SK-N-SH (cell line): ENCODE measurements at regions of chr7 and their contacts with region 1.

Region 1: DNA sequence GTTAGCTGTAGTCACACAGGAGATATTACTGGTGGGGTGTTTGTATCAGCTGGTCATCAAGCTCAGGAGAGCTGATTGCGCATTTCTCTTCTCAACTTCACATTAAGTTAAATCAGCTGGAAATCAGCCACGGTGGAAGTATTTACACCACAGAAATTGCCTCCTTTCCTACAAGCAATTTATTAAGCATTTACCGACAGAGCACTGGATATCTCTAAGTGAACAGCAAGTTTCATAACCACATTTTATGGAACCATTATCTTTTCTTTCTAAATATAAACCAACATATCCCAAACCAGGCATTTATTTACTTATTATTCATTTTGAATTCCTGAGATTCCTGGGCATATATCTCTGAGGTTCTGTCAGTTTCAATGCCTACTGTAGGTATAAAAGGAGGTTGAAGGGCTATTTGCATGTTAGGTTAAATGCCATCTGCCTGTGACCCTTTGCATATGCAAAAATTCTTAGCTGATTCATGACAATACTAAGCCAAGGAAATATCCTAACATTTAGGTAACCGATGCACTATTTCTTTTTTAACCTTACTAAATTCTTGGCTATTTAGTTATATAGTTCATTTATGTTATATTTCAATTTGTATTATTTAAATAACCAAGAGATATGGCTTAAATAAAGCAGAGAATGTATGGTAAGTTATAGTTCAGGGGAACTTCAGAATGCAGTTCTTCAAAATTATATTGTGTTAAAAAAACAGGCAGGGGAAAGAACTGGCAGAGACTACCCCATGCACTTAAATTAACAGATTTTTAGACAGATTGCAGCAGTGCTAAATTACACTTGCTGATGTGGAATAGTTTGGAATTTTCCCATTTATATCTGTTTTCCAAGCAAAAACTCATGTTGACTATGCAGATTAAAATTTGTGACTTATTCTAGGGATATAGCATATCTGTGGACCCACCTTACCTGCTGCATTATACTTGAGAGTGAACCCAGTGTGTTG is 56.8 kb downstream of the DYNC1I1 start:
- DNase-seq: no peak
- H3K4me3 ChIP-seq: no peak overlapping the region
- H3K27ac ChIP-seq: no peak overlapping the region
- H3K4me1 ChIP-seq: no peaks in the 10 kb centered on the region; a peak in 1 of 4 replicates
- H3K27me3 ChIP-seq: no peaks in the 10 kb centered on the region
- CTCF ChIP-seq: no peak
- EP300 ChIP-seq: no peak
- RAD21 ChIP-seq: no peak

Region 2: GRCh38 chr7:95316588-95316987 is 512.5 kb before region 1 on chr7:
- CTCF ChIA-PET with region 1: no interaction called
- POLR2A ChIA-PET with region 1: no interaction called
- DNase-seq: no peak
- H3K4me3 ChIP-seq: no peak overlapping the region
- H3K27ac ChIP-seq: no peak overlapping the region
- H3K4me1 ChIP-seq: no peaks in the 10 kb centered on the region
- H3K27me3 ChIP-seq: no peaks in the 10 kb centered on the region
- CTCF ChIP-seq: no peak
- EP300 ChIP-seq: no peak
- RAD21 ChIP-seq: no peak

Region 3: DNA sequence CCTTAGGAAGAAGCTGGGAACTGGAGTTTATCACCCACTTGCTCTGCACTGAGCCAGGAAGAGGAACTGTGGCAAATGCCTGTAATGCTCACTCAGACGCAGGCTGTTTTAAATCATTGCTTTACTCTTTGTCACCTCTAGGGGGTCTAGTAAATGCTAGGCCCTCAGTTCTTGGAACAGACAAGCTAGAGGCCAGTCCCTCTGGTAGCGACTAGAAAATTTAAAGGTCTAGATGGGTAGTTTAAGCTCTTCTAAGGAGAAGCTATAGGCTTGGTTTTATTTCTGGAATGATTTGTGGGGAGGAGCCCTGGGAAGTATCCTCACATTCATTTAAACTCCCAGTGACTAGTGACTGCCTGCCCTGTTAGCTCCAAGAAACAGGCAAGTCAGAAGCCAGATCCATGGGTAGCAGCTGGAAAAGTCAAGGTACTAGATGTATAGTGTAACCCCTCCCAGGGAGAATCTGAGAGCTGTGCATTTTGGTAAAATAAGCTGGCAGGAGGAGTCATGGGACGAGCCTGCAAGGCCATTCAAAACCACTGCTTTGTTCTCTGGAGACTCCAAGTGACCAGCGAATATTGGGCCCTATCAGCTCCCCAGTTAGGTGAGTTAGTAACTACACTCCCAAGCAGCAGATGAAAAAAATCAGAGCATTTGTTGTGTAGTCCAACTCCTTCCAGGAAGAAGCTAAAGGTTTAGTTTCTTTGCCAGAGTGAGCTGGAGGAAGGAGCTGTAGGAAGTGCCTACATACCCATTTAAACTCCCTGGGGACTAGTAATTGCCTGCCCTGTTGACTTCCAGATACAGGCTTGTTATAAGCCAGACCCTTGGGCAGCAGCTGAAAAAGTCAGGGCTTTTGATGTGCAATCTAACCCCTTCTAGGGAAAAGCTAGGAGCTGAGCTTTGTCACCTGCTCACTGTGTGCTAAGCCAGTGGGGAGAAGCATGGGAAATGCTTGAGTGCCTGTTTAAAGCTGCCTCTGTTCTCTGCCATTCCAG is 12.1 kb after region 1 on chr7:
- CTCF ChIA-PET with region 1: interaction called, 10 read pairs
- POLR2A ChIA-PET with region 1: no interaction called
- DNase-seq: peak; percentile 46
- H3K4me3 ChIP-seq: no peak overlapping the region; a peak in 1 of 4 replicates
- H3K27ac ChIP-seq: no peak overlapping the region
- H3K4me1 ChIP-seq: no peaks in the 10 kb centered on the region; a peak in 1 of 4 replicates
- H3K27me3 ChIP-seq: no peaks in the 10 kb centered on the region
- CTCF ChIP-seq: peak; percentile 56
- EP300 ChIP-seq: no peak
- RAD21 ChIP-seq: no peak